Psoas muscle (tissue), 8 donors: ENCODE measurements at regions of chr22 and their contacts with region 1.

Region 1: DNA sequence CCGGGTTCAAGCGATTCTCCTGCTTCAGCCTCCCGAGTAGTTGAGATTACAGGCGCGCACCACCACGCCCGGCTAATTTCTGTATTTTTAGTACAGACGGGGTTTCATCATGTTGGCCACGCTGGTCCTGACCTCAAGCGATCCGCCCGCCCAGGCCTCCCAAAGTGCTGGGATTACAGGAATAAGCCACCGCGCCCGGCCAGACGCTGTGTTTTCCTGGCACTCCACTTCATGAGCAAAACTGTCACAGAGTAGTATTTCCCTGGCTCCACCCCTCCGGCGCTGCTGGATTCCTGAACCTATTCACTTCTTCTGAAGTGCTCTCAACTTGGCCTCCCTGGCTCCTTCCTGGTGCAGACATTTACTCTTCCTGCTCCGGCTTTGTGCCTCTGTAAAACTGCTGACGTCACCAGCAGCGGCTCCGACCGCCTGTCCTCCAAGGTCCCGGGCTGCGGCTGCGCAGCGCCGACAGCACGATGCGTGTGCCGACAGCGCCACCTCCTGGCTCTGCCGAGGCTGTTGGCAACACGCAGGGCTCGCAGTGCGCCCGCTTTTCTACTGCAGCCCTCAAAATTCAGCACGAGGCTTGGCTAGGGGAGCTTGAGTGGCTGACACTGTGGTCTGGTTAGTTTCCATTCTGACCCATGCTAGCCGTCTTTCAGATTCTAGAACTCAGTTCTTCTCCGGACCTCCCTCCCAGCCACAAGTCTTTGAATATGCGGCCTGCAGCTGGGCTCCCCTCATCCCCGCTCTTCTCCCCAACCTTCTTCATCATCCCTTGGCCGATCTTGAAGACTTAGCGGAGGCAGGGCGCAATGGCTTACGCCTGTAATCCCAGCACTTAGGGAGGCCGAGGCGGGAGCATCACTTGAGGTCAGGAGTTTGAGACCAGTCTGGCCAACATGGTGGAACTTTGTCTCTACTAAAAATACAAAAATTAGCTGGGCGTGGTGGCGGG is 36.6 kb downstream of the APOL3 start:
- DNase-seq: peak; percentile 93 to 97
- ATAC-seq: peak; percentile 96 to 98 (median 96)
- H3K4me3 ChIP-seq: peak overlapping the region; percentile 60
- H3K27ac ChIP-seq: peak overlapping the region; percentile 90
- H3K4me1 ChIP-seq: no peaks in the 10 kb centered on the region
- H3K27me3 ChIP-seq: no peaks in the 10 kb centered on the region
- CTCF ChIP-seq: peak; percentile 99

Region 2: DNA sequence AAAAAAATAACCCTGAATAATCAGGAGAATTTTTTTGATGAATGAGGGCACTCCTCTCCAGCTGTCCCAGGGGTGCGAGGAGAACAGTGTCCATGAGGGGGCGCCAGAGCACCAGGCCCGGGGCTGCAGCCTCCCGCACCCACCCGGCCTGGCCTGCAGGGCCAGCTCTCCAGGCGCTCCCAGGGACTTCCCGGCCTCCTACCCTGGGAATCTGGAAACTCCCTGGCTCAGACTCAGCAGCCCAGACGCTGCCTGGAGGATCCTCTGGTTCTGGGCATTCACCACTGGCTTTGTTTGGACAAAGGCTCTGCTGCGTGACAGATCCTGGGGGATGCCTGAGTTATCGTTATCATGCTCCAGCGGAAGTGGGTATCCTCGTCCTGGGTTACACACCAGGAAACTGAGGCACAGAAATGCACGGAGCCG is 693.0 kb before region 1 on chr22:
- intact Hi-C with region 1: loop called (anchors 10 kb)
- DNase-seq: peak; percentile 88 to 92
- ATAC-seq: peak; percentile 95 to 98 (median 96)
- H3K4me3 ChIP-seq: no peak overlapping the region
- H3K27ac ChIP-seq: no peak overlapping the region
- H3K4me1 ChIP-seq: peaks cover 24% of the 10 kb centered on the region
- H3K27me3 ChIP-seq: no peaks in the 10 kb centered on the region
- CTCF ChIP-seq: peak; percentile 96

Region 3: GRCh38 chr22:35622191-35622913 is 501.6 kb before region 1 on chr22:
- intact Hi-C with region 1: loop called in 1 of 2 experiments (anchors 5 kb)
- DNase-seq: peak; percentile 79 to 90
- ATAC-seq: peak; percentile 77 to 84 (median 79)
- H3K4me3 ChIP-seq: peak overlapping the region; percentile 58
- H3K27ac ChIP-seq: peak overlapping the region; percentile 93
- H3K4me1 ChIP-seq: peaks cover 51% of the 10 kb centered on the region
- H3K27me3 ChIP-seq: no peaks in the 10 kb centered on the region
- CTCF ChIP-seq: no peak

Region 4: GRCh38 chr22:35627264-35628041 is 496.5 kb before region 1 on chr22:
- intact Hi-C with region 1: loop called (anchors 1 to 5 kb)
- DNase-seq: peak; percentile 75 to 86
- ATAC-seq: peak; percentile 1 to 35 (median 18)
- H3K4me3 ChIP-seq: peak overlapping the region; percentile 65
- H3K27ac ChIP-seq: peak overlapping the region; percentile 68
- H3K4me1 ChIP-seq: peaks cover 16% of the 10 kb centered on the region
- H3K27me3 ChIP-seq: no peaks in the 10 kb centered on the region
- CTCF ChIP-seq: peak; percentile 33

Region 5: GRCh38 chr22:35684270-35684700 is 439.7 kb before region 1 on chr22:
- intact Hi-C with region 1: loop called in 1 of 2 experiments (anchors 1 kb)
- DNase-seq: no peak
- ATAC-seq: peak; percentile 91 to 98 (median 96)
- H3K4me3 ChIP-seq: no peak overlapping the region
- H3K27ac ChIP-seq: peak overlapping the region; percentile 92
- H3K4me1 ChIP-seq: peaks cover 19% of the 10 kb centered on the region
- H3K27me3 ChIP-seq: no peaks in the 10 kb centered on the region
- CTCF ChIP-seq: peak; percentile 31

Region 6: GRCh38 chr22:35930933-35931332 is 193.0 kb before region 1 on chr22:
- intact Hi-C with region 1: loop called (anchors 2 to 5 kb)
- DNase-seq: no peak
- ATAC-seq: peak; percentile 90 to 96 (median 93)
- H3K4me3 ChIP-seq: no peak overlapping the region
- H3K27ac ChIP-seq: no peak overlapping the region
- H3K4me1 ChIP-seq: no peaks in the 10 kb centered on the region
- H3K27me3 ChIP-seq: no peaks in the 10 kb centered on the region
- CTCF ChIP-seq: peak; percentile 75

Region 7: GRCh38 chr22:35971456-35972119 is 152.4 kb before region 1 on chr22:
- intact Hi-C with region 1: no loop called
- DNase-seq: no peak
- ATAC-seq: peak in 2 of 4 donors; percentile 41 to 55
- H3K4me3 ChIP-seq: no peak overlapping the region
- H3K27ac ChIP-seq: no peak overlapping the region
- H3K4me1 ChIP-seq: peaks cover 29% of the 10 kb centered on the region
- H3K27me3 ChIP-seq: no peaks in the 10 kb centered on the region
- CTCF ChIP-seq: no peak

Region 8: DNA sequence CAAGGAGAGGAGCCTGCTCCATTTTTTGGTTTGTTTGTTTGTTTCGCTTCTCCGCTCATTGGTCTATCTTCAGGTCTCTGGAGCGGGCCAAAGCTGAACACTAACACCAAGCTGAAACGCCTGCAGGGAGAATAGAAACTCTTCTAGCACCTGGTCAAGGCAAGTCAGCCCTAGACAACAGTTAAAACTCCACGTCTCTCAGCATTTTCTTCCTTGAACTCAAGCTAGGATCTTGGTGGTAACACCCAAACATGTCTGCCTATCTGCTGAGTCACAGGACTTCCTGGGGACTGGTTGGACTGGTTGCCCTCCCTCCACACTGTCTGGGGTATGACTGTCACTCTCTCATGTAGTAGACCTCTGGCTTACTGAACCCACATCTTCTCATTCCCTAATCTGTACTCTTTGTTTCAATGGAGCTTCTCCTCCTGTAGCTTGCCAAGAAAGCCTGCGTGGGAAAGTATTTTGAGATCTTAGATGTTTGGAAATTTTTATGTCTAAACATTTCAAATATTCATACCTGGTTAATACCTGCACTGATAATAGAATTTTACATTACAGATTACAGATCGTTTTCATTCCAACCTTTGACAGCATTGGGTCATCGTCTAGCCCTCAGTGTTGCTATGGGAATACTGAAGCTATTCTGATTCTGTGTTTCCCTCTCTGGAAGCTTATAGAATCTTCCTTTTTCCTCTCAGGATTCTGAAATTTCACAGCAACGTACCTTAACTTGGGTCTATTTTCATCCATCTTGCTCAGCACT is 71.3 kb before region 1 on chr22:
- intact Hi-C with region 1: no loop called
- DNase-seq: no peak
- ATAC-seq: no peak
- H3K4me3 ChIP-seq: no peak overlapping the region
- H3K27ac ChIP-seq: no peak overlapping the region
- H3K4me1 ChIP-seq: peaks cover 22% of the 10 kb centered on the region
- H3K27me3 ChIP-seq: no peaks in the 10 kb centered on the region
- CTCF ChIP-seq: no peak

Region 9: GRCh38 chr22:36065775-36066559 is 58.0 kb before region 1 on chr22:
- intact Hi-C with region 1: loop called (anchors 1 to 5 kb)
- DNase-seq: peak; percentile 92 to 93
- ATAC-seq: peak; percentile 93 to 97 (median 96)
- H3K4me3 ChIP-seq: peak overlapping the region; percentile 73
- H3K27ac ChIP-seq: peak overlapping the region; percentile 85
- H3K4me1 ChIP-seq: no peaks in the 10 kb centered on the region
- H3K27me3 ChIP-seq: no peaks in the 10 kb centered on the region
- CTCF ChIP-seq: peak; percentile 100

Region 10: DNA sequence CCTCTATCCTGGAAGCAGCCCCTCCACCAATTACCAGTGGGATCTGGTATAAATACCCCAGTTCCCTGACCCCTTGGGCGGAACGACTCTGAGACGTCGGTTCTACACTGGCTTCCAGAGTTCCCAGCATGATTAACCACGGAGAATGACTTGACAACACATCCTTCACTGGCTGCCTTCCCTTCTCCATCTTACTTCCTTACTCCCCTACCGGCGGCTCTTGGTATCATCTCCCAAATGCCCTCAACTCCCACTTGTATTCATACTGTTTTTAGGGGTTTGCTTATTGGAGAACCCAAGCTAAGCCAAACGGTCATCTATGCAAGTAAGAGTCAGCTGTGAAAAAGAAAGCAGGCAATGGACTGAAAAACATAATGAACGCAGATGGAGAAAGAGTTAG is 19.5 kb before region 1 on chr22:
- intact Hi-C with region 1: no loop called
- DNase-seq: no peak
- ATAC-seq: no peak
- H3K4me3 ChIP-seq: no peak overlapping the region
- H3K27ac ChIP-seq: no peak overlapping the region
- H3K4me1 ChIP-seq: no peaks in the 10 kb centered on the region
- H3K27me3 ChIP-seq: no peaks in the 10 kb centered on the region
- CTCF ChIP-seq: no peak

Region 11: DNA sequence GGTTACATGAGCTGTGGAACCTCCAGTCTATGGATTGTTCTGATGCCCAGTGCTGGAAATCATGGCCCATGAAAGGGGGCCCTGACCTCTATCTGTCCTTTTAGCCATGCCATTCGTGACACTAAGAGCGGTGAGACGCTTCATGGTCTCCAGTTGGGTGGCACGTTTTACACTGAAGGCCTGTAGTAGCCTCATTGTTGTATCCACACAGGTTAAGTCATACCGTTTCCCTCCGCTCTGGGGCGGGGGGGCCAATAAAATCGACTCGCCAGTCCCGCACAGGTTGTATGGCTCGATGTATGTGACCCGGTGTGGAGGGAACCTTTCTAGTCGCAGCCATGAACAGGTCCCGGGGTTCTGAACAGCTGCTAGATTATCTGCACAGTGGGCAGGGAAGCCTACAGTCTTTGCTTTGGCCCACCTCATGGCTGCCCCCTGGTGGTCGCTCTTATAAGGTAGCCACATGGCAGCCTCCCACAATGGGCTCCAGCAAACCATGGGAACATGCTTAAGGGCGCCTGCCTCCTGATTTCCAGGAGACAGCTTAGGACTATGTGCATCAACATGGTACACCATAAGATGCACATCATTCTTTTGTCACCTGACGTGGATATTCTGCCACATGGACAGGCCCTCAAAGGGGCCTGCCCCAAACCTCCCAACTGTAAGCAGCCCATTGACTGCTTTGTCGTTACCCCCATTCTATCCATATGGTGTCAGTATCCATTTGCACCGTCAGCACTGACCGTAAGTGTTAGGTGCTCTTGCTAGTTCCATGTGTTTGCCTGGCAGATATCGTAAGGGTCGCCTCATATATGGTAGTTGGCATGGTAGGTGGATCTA is 56.3 kb after region 1 on chr22:
- intact Hi-C with region 1: no loop called
- DNase-seq: peak; percentile 86 to 90
- ATAC-seq: peak; percentile 83 to 95 (median 90)
- H3K4me3 ChIP-seq: no peak overlapping the region
- H3K27ac ChIP-seq: no peak overlapping the region
- H3K4me1 ChIP-seq: no peaks in the 10 kb centered on the region
- H3K27me3 ChIP-seq: no peaks in the 10 kb centered on the region
- CTCF ChIP-seq: peak; percentile 88